ENCODE measurements at regions of chr12 and their contacts with region 1.

Region 1: DNA sequence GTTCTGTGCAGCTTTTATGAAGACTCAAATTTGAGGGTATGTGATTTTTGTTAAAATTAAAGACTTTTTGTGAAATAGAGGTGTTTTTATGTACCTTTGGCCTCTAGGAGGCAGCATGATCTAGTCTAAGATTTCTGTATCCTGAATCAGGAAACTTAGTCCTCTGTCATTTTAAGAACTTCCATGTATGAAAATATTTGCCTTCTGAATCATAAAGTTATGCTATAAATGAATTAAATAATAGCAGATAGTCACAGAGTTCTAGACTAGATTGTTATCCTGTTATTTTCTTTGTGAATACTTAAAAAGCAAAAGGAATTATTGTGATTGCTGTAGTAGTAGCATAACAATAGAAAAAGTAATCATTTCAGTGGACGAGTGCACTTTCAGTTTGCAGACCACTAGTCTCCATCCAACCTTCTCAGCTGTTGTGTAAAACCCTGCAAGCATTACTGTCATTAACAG is 56.3 kb downstream of the FGD4 start:
- DNase-seq: peak; percentile 42
- ATAC-seq: no peak
- H3K4me3 Mint-ChIP-seq: no peak overlapping the region
- H3K27ac Mint-ChIP-seq: no peak overlapping the region
- H3K4me1 Mint-ChIP-seq: peaks cover 3% of the 10 kb centered on the region
- H3K27me3 Mint-ChIP-seq: peaks cover 6% of the 10 kb centered on the region

Region 2: GRCh38 chr12:32248441-32249140 is 207.0 kb before region 1 on chr12:
- CTCF ChIA-PET with region 1: no interaction called
- POLR2A ChIA-PET with region 1: no interaction called
- DNase-seq: no peak
- ATAC-seq: no peak
- H3K4me3 Mint-ChIP-seq: no peak overlapping the region
- H3K27ac Mint-ChIP-seq: no peak overlapping the region
- H3K4me1 Mint-ChIP-seq: no peaks in the 10 kb centered on the region
- H3K27me3 Mint-ChIP-seq: no peaks in the 10 kb centered on the region

Region 3: DNA sequence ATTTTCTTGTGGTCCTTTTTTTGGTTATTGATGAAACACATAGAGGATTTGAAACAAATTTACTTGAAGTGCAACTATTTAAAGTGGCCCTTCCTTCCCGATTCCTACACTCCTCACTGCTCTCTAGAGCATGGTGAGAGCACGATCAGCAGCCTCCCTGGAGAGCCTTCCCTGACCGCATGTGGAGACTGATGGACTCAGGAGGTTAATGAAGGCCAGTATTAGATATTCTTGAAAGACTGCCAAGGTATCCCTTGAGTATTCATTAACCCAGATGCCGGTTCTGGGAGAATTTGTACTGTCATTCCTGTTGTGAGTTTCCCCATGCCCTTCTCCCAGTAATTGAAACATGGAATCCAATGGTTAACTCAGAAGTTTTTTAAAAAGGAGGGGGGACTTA is 159.1 kb before region 1 on chr12:
- CTCF ChIA-PET with region 1: no interaction called
- POLR2A ChIA-PET with region 1: no interaction called
- DNase-seq: no peak
- ATAC-seq: no peak
- H3K4me3 Mint-ChIP-seq: no peak overlapping the region
- H3K27ac Mint-ChIP-seq: no peak overlapping the region
- H3K4me1 Mint-ChIP-seq: no peaks in the 10 kb centered on the region
- H3K27me3 Mint-ChIP-seq: no peaks in the 10 kb centered on the region

Region 4: DNA sequence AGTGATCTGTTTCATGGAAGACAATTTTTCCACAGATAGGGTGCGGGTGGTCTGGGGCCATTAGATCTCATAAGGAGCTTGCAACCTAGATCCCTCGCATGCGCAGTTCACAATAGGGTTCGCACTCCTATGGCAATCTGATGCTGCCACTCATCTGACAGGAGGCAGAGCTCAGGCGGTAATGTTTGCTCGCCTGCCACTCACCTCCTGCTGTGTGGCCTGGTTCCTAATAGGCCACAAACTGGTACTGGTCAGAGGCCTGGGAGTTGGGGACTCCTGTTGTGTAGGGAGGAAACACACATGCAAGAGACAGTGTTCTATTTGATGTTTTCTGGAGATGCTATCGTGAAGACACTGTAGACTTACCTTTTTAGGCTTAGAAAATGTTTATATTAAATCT is 133.3 kb before region 1 on chr12:
- CTCF ChIA-PET with region 1: no interaction called
- POLR2A ChIA-PET with region 1: no interaction called
- DNase-seq: no peak
- ATAC-seq: no peak
- H3K4me3 Mint-ChIP-seq: no peak overlapping the region
- H3K27ac Mint-ChIP-seq: no peak overlapping the region
- H3K4me1 Mint-ChIP-seq: no peaks in the 10 kb centered on the region
- H3K27me3 Mint-ChIP-seq: no peaks in the 10 kb centered on the region

Region 5: DNA sequence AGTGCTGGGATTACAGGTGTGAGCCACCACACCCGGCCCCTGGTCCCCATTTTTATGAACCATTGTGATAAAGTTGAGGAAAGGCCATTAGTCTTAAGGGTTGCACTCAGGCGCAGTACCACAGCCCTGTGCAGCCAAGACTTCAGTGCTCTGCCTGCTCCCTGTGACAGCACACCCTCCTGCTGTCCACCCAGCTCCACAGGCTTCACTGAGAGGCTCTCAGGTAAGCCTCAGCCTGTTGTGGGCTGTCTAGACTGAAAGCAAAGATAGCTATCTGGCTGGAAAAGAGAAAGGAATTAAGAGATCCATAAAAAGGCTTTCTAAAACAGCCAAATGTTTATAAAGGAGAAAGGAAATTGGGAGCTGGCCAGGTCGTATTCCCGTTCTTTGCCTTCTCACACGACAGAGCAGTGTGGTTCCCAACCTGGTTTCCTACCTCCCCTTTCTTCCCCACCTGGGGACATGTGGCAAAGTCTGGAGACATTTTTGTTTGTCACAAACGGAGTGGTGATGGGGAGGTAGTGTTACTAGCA is 204.3 kb after region 1 on chr12:
- CTCF ChIA-PET with region 1: interaction called, 24 read pairs
- POLR2A ChIA-PET with region 1: no interaction called
- DNase-seq: no peak
- ATAC-seq: no peak
- H3K4me3 Mint-ChIP-seq: no peak overlapping the region
- H3K27ac Mint-ChIP-seq: no peak overlapping the region
- H3K4me1 Mint-ChIP-seq: peaks cover 10% of the 10 kb centered on the region
- H3K27me3 Mint-ChIP-seq: no peaks in the 10 kb centered on the region

Region 6: GRCh38 chr12:32671930-32672780 is 216.5 kb after region 1 on chr12:
- CTCF ChIA-PET with region 1: interaction called, 83 read pairs
- POLR2A ChIA-PET with region 1: no interaction called
- DNase-seq: peak; percentile 54
- ATAC-seq: peak; percentile 44
- H3K4me3 Mint-ChIP-seq: no peak overlapping the region
- H3K27ac Mint-ChIP-seq: no peak overlapping the region
- H3K4me1 Mint-ChIP-seq: no peaks in the 10 kb centered on the region
- H3K27me3 Mint-ChIP-seq: no peaks in the 10 kb centered on the region

Region 7: GRCh38 chr12:32679091-32679919 is 223.7 kb after region 1 on chr12 and contains the start of gene DNM1L:
- CTCF ChIA-PET with region 1: interaction called, 12 read pairs
- POLR2A ChIA-PET with region 1: no interaction called
- DNase-seq: peak; percentile 94
- ATAC-seq: peak; percentile 99
- H3K4me3 Mint-ChIP-seq: peak within 1 kb of the TSS; percentile 85
- H3K27ac Mint-ChIP-seq: peak within 1 kb of the TSS; percentile 87
- H3K4me1 Mint-ChIP-seq: peaks cover 29% of the 10 kb centered on the region
- H3K27me3 Mint-ChIP-seq: no peaks in the 10 kb centered on the region
- total RNA-seq, gene DNM1L: 59.5 to 64.7 TPM

Measured in activated CD8-positive, alpha-beta T cell treated with anti-CD3 and anti-CD28 coated beads, Interleukin-2, amount 10 ng/mL, durations not matched to agents 7 days and 5 days (primary cell).